ENCODE measurements at regions of chr7 and their contacts with region 1.

Region 1: GRCh38 chr7:66167773-66168387 is 37.3 kb upstream of the TPST1 start:
- DNase-seq: peak; percentile 23
- H3K4me3 ChIP-seq: no peak overlapping the region
- H3K27me3 ChIP-seq: no peaks in the 10 kb centered on the region
- CTCF ChIP-seq: no peak

Region 2: GRCh38 chr7:66150471-66150870 is 17.4 kb before region 1 on chr7:
- CTCF ChIA-PET with region 1: interaction called, 3 read pairs
- POLR2A ChIA-PET with region 1: interaction called, 16 read pairs
- DNase-seq: no peak
- H3K4me3 ChIP-seq: no peak overlapping the region
- H3K27me3 ChIP-seq: no peaks in the 10 kb centered on the region
- CTCF ChIP-seq: no peak

Region 3: DNA sequence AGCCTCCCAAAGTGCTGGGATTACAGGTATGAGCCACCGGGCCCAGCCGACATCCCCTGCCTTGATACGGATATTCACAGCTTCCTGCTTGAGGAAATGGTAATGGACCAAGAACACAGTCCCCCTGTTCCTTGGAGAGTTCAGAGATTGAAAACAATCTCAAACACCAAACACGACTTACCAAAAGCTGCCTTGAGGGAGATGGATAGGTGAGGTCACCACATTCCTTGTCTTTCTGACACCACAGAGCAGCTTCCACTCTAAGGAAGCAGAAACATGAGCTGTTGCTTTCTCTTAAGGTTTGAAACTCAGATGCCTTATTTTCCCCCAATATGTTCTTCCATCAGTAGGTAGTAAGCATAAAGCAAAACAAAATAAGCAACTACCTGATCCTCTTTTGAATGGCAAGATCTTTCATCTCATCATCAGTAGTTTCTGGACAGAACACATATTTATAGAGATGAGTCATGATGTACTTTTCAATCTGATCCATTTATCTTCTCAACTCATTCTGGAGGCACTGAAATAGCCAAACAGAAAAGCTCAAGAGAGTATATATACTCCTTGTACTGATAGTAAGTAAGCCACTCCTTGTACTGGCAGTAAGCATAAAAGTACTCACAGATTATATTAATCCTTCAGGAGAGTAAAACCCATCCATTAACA is 261.8 kb after region 1 on chr7:
- CTCF ChIA-PET with region 1: no interaction called
- POLR2A ChIA-PET with region 1: no interaction called
- DNase-seq: no peak
- H3K4me3 ChIP-seq: no peak overlapping the region
- H3K27me3 ChIP-seq: no peaks in the 10 kb centered on the region
- CTCF ChIP-seq: no peak

Measured in BJ (cell line).